Activated naive CD4-positive, alpha-beta T cell treated with anti-CD3 and anti-CD28 coated beads, Interleukin-2, amount 10 ng/mL, durations not matched to agents 7 days and 5 days (primary cell): ENCODE measurements at regions of chr11 and their contacts with region 1.

Region 1: GRCh38 chr11:18775492-18776292 is 15.9 kb downstream of the PTPN5 start:
- DNase-seq: peak; percentile 77
- H3K4me3 Mint-ChIP-seq: no peak overlapping the region
- H3K27ac Mint-ChIP-seq: no peak overlapping the region
- H3K4me1 Mint-ChIP-seq: peaks cover 21% of the 10 kb centered on the region
- H3K27me3 Mint-ChIP-seq: peaks cover 19% of the 10 kb centered on the region

Region 2: DNA sequence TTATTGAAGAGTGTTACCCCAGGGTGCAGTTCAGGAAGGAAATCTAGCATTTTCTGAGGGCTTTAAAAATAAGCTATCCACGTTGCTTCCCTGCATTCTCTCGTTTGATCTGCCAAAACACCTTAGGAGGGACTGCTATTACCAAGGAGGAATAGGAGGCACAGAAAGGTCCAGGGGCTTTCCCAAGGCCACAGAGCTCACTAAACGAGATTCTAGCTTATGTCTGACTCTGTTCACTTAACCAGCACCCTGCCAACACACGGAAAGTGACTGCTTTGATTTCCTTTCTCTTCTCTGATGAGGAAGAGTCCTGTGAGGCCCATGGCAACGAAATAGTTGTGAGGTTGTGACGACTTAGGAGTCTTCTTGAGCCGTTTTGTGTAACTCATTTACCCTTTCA is 19.3 kb after region 1 on chr11:
- CTCF ChIA-PET with region 1: interaction called, 88 read pairs
- DNase-seq: no peak
- H3K4me3 Mint-ChIP-seq: no peak overlapping the region
- H3K27ac Mint-ChIP-seq: no peak overlapping the region
- H3K4me1 Mint-ChIP-seq: no peaks in the 10 kb centered on the region
- H3K27me3 Mint-ChIP-seq: peaks cover 75% of the 10 kb centered on the region

Region 3: DNA sequence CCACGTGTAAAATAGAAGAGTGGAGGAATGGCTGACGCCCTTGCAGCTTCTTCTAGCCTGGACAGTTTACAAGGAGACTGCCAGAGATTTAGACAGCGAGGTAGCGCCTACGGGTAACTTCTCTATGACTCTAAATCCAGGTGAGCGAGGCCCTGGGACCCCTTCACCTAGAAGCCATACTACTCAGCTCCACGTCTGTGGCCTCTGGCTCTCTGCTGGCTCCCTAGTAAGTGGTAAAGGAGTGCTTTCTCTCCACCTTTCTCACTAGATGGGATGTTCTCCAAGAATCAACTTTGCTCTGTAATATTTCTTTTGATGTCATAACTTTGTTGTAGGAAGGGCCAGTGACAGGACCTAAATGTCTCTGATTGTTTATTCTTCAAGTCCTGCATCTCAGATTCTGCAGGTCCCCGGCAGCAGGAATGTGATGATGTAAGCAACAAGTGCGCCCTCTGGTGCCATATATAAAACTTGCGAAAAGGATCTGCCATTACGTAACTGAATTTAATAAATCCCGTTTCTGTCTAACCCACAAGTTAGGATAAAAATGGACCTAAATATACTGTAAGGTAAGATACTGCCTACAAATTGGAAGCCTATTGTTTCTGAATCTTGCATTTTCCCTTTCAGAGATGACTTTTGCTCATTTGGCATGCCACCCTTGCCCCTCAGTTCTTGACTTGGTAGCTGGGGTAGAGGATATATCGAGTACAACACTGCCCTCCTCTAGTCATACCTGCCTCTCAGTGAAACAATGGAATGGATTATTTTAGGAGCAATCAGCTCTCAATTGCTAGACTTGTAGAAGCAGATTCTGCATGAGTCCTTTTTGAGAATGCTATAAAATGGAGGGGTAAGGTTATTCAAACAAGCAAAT is 26.9 kb after region 1 on chr11:
- CTCF ChIA-PET with region 1: interaction called, 88 read pairs
- DNase-seq: peak; percentile 52
- H3K4me3 Mint-ChIP-seq: no peak overlapping the region
- H3K27ac Mint-ChIP-seq: no peak overlapping the region
- H3K4me1 Mint-ChIP-seq: no peaks in the 10 kb centered on the region
- H3K27me3 Mint-ChIP-seq: peaks cover 22% of the 10 kb centered on the region

Region 4: GRCh38 chr11:18934195-18934814 is 158.6 kb after region 1 on chr11:
- CTCF ChIA-PET with region 1: no interaction called
- DNase-seq: no peak
- H3K4me3 Mint-ChIP-seq: no peak overlapping the region
- H3K27ac Mint-ChIP-seq: no peak overlapping the region
- H3K4me1 Mint-ChIP-seq: no peaks in the 10 kb centered on the region
- H3K27me3 Mint-ChIP-seq: no peaks in the 10 kb centered on the region